ENCODE measurements at regions of chr6 and their contacts with region 1.

Region 1: DNA sequence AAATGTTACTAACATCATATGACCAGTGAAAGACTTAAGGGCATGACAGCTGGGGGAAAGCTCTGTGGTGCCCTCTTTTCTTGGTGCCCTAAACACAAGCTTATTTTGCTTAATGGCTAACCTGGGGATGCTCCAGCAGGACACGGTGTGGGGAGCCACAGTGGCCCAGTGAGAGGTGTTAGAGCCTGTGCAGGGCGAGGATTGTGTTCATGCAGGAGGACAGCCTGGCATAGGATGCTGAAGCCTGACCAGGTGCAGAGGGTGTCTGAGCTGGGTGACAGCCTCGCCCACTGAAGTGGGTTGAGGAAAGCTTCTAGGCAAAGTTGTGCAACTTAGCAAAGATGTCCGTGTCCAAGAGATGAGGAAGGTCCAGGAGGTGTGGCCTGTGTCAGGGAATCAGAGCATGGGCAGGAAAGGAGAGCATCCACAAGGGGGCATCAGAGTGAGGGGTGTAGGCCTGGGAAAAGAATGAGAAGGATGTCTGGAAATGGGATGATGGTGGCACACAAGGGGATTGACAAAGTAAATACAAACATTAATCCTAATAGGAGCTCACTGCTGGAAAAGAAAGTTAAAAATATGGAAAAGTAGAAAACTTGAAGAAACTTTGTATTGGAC is 33.9 kb downstream of the SLC17A4 start:
- DNase-seq: peak in 2 of 5 donors; percentile 21 to 26
- ATAC-seq: peak in 2 of 4 donors; percentile 36 to 39
- H3K4me3 ChIP-seq: no peak overlapping the region
- H3K27ac ChIP-seq: no peak overlapping the region
- H3K4me1 ChIP-seq: no peaks in the 10 kb centered on the region
- H3K27me3 ChIP-seq: no peaks in the 10 kb centered on the region
- CTCF ChIP-seq: peak in 10 of 12 donors; percentile 22 to 46 (median 38)
- POLR2A ChIP-seq: no peak

Region 2: DNA sequence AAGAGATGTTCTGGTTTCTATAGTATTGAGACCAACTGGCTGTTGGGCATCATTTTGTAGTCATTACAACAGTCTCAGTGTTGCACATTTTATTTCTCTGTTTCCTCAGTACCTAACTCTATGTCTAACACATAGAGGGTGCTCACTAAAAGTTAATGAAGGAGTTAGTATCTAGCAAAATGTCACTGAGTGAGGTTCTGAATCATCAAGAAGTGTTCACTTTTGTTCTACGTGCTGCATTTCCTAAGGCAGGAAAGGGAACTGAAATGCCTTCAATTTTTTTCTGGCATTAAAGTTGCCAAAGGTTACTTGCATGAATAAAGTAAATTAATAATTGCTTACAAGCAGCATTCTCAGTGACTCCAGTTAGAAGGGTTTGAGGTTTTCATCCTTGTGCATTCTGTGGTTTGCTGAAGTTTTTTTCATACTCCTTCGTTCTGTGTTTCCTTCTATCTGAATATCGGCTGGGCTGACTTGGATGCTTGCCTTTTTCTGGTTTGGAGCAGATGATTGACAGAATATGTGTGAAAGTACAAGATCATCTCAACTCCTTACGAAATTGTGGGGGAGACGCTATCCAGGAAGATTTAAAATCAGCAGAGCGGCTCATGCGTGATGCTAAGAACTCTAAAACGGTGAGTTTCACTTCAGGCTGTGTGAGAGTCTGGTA is 250.9 kb before region 1 on chr6:
- intact Hi-C with region 1: no loop called
- DNase-seq: no peak
- ATAC-seq: no peak
- H3K4me3 ChIP-seq: peak overlapping the region in 2 of 12 donors; percentile 13 to 17
- H3K27ac ChIP-seq: no peak overlapping the region
- H3K4me1 ChIP-seq: peaks cover 0 to 3% (median 0%) of the 10 kb centered on the region in 12 donors
- H3K27me3 ChIP-seq: no peaks in the 10 kb centered on the region
- CTCF ChIP-seq: no peak
- POLR2A ChIP-seq: no peak

Region 3: GRCh38 chr6:25735261-25735660 is 53.2 kb before region 1 on chr6:
- intact Hi-C with region 1: no loop called
- DNase-seq: no peak
- ATAC-seq: no peak
- H3K4me3 ChIP-seq: no peak overlapping the region
- H3K27ac ChIP-seq: no peak overlapping the region
- H3K4me1 ChIP-seq: no peaks in the 10 kb centered on the region
- H3K27me3 ChIP-seq: peaks cover 0 to 29% (median 9%) of the 10 kb centered on the region in 9 donors
- CTCF ChIP-seq: no peak
- POLR2A ChIP-seq: no peak

Region 4: DNA sequence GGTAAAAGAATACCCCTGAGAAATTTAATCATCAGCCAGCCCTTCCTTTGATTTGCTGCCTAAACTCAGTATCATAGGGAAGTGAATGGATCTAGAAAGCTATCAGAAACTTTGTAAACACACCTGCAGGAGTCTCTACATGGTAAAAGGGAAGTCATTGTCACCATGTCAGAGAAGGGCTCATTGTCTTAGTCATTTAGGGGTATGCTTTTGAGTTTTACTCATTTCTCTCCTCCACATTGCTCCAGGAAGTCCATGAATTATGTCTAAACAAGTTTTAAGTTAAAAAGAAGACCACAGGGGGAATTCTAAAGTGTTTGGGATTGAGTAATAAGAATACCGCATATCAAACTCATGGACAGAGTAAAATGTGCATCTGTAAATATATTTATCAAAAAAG is 41.0 kb after region 1 on chr6:
- intact Hi-C with region 1: no loop called
- DNase-seq: no peak
- ATAC-seq: no peak
- H3K4me3 ChIP-seq: no peak overlapping the region
- H3K27ac ChIP-seq: no peak overlapping the region
- H3K4me1 ChIP-seq: no peaks in the 10 kb centered on the region
- H3K27me3 ChIP-seq: peaks cover 0 to 10% (median 0%) of the 10 kb centered on the region in 9 donors
- CTCF ChIP-seq: no peak
- POLR2A ChIP-seq: no peak

Region 5: DNA sequence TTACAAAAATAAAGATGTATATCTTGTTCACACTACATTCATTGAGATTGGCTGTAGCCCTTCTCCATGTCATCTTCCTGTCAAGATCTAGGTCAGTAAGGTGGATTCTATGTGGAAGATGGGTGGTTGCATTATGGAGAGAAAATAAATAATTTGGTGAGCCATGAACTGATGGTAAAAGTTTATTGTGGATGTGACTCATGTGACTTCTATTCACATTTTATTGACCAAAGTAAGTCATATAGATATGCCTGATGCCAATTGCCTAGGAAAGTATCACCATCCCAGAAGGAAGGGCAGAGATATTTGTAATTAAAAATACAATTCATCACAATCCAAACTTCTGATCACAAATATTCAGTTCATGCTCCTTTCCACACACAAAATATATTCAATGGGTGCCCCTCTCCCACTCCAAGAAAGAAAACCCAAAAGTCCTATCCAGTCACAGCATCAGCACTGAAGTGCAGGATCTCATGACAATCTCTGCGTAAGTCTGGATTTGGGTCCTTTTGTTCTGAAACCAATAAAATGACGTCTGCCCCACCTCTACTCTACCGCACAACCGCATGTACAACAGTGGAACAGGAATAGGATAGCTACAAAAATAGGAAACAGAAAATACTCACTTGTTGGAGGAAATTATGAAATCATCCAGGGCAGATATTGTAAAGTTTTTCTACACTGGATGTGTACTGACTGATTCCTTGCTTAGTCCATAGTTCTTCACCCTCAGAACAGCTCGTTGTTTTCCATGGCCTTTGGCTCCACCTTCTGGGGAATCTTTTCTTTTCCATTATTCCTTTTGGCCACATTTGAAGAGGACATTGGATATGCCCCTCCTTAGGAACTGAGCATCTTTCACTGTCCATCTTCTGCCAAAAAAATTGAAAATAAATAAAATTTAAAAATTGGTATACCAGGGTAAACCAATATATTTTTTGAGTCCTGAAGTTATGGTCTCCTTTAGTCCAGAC is 101.8 kb after region 1 on chr6:
- intact Hi-C with region 1: loop called in 2 of 10 experiments (anchors 5 to 10 kb)
- DNase-seq: peak in 1 of 5 donors; percentile 11
- ATAC-seq: peak in 3 of 4 donors; percentile 52 to 67 (median 63)
- H3K4me3 ChIP-seq: no peak overlapping the region
- H3K27ac ChIP-seq: no peak overlapping the region
- H3K4me1 ChIP-seq: no peaks in the 10 kb centered on the region
- H3K27me3 ChIP-seq: no peaks in the 10 kb centered on the region
- CTCF ChIP-seq: peak in 11 of 12 donors; percentile 10 to 62 (median 44)
- POLR2A ChIP-seq: no peak

Region 6: GRCh38 chr6:25902071-25902470 is 113.7 kb after region 1 on chr6:
- intact Hi-C with region 1: no loop called
- DNase-seq: no peak
- ATAC-seq: no peak
- H3K4me3 ChIP-seq: no peak overlapping the region
- H3K27ac ChIP-seq: no peak overlapping the region
- H3K4me1 ChIP-seq: no peaks in the 10 kb centered on the region
- H3K27me3 ChIP-seq: peaks cover 0 to 19% (median 0%) of the 10 kb centered on the region in 9 donors
- CTCF ChIP-seq: no peak
- POLR2A ChIP-seq: no peak

Region 7: DNA sequence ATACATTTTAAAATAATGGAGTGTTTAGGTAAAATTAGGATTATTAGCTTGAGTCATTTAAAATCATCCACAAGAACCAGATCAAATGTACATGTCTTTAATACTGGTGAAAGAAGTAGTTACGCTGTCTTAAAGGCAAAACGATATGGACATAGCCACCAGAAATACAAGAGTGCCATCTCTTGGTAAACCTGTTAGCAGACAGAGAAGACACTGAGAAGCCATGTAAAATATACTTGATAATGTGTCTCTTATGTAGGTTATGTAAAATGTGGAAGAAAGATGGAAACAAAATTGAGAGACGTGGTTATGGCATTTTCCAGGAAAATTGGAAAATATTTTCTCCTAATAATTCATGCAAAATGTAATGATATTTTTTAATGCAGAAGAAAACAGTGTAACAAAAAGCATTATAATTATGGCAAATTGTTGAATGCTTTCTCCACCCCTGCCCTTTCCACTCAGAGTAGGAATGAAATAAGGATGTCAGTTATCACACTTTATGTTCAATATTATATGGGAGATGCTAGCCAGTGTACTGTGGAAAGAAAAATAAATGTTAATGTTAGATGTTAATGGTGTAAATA is 154.2 kb after region 1 on chr6:
- intact Hi-C with region 1: loop called in 2 of 10 experiments (anchors 5 kb)
- DNase-seq: no peak
- ATAC-seq: peak in 1 of 4 donors; percentile 59
- H3K4me3 ChIP-seq: no peak overlapping the region
- H3K27ac ChIP-seq: no peak overlapping the region
- H3K4me1 ChIP-seq: peaks cover 0 to 3% (median 0%) of the 10 kb centered on the region in 12 donors
- H3K27me3 ChIP-seq: no peaks in the 10 kb centered on the region
- CTCF ChIP-seq: peak in 11 of 12 donors; percentile 7 to 63 (median 40)
- POLR2A ChIP-seq: no peak

Region 8: GRCh38 chr6:25992413-25993037 is 204.1 kb after region 1 on chr6:
- intact Hi-C with region 1: loop called in 1 of 10 experiments (anchors 5 kb)
- DNase-seq: peak; percentile 95 to 98 (median 96)
- ATAC-seq: peak; percentile 88 to 98 (median 98)
- H3K4me3 ChIP-seq: peak overlapping the region; percentile 38 to 83 (median 66)
- H3K27ac ChIP-seq: peak overlapping the region; percentile 80 to 95 (median 91)
- H3K4me1 ChIP-seq: peaks cover 0 to 23% (median 11%) of the 10 kb centered on the region in 12 donors
- H3K27me3 ChIP-seq: no peaks in the 10 kb centered on the region
- CTCF ChIP-seq: peak; percentile 97 to 100 (median 99)
- POLR2A ChIP-seq: peak in 1 of 2 donors; percentile 85

Region 9: DNA sequence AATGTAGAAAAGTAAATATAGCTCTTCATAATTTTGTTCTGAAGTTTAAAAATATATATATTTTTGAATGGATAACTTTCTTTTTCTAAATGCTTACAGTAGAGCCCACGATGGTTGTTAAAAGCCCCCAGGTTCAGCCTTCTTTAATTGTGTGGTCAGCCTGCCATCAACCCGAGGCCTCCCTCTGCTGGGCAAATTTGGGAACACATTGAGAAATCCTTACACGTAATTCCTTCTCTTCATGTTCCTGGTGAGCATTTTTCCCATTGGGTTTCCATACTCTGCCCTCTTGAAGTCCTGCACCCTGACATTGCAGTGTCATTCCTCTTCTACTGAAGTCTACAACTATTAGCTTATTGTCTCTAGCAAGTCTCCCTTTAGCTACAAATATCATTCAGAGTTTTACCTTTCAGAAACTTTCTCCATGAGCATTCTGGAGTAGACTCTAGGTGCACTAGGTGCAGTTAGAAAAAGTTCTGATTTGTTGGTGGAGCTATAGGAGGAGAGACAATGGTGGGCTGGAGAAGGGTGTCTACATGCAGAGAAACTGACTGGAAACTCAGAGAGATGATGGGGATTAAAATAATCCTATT is 214.8 kb after region 1 on chr6:
- intact Hi-C with region 1: loop called in 4 of 10 experiments (anchors 5 to 10 kb)
- DNase-seq: peak in 4 of 5 donors; percentile 45 to 57 (median 46)
- ATAC-seq: peak in 3 of 4 donors; percentile 42 to 61 (median 53)
- H3K4me3 ChIP-seq: no peak overlapping the region
- H3K27ac ChIP-seq: no peak overlapping the region
- H3K4me1 ChIP-seq: peaks cover 0 to 5% (median 0%) of the 10 kb centered on the region in 12 donors
- H3K27me3 ChIP-seq: no peaks in the 10 kb centered on the region
- CTCF ChIP-seq: peak; percentile 67 to 86 (median 78)
- POLR2A ChIP-seq: no peak